AG04449 (cell line): ENCODE measurements at regions of chr5 and their contacts with region 1.

Region 1: GRCh38 chr5:142587354-142587965 is 98.4 kb downstream of the FGF1 start:
- DNase-seq: no peak
- H3K4me3 ChIP-seq: no peak overlapping the region
- CTCF ChIP-seq: peak; percentile 51

Region 2: GRCh38 chr5:142576303-142576702 is 11.2 kb before region 1 on chr5:
- CTCF ChIA-PET with region 1: interaction called, 11 read pairs
- POLR2A ChIA-PET with region 1: no interaction called
- DNase-seq: no peak
- H3K4me3 ChIP-seq: no peak overlapping the region
- CTCF ChIP-seq: no peak

Region 3: DNA sequence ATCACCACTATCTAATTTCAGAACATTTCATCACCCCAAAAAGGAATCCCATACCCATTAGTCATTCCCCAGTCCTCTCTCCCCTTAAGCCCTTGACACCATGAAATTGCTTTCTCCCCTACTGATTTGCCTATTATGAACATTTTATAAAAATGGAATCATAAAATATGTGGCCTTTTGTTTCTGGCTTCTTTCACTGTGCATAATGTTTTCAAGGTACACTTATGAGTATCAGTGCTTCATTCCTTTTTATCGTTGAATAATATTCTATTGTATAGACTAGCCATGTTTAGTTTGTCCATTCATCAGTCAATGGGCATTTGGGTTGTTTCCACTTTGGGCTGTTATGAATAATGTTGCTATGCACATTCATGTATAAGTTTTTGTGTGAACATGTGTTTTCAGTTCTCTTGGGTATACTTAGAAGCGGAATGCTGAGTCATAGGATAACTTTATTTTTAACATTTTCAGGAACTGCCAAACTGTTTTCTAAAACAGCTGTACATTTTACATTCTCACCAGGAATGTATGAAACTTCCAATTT is 138.8 kb after region 1 on chr5:
- CTCF ChIA-PET with region 1: no interaction called
- POLR2A ChIA-PET with region 1: no interaction called
- DNase-seq: peak; percentile 73
- H3K4me3 ChIP-seq: no peak overlapping the region
- CTCF ChIP-seq: no peak